ENCODE measurements at regions of chr9 and their contacts with region 1.

Region 1: DNA sequence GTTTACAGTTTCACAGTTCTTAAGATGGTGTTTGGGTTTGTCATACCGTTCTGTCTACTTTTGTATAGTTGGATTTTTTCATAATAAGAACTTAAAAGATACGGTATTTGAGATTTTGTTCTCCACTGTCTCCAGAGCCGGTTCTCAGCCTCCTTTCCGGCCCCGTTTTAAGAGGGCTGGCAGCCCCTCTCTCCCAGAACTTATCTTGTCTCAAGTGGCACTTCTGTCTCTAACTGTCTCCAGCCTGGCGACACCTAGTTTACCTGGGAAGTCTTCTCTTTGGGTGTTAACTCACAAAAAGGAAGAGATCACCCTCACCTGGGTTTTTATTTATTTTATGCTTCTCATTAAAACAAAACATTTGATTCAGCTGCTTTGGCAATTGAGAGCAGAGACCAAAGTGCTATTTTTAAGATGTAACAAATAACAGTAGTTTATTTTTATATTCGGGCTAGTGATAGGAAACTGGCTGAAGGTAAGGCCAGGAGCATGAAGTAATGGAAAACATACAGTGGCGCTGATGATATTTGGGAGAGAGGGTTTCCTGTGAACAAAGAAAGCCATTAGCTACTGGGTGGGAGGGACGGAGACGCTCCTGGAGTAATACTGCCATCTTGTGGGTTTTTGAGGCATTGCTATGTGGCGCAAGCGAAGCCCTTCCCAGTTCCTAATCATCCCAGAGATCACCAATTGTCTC is 48.3 kb downstream of the ACER2 start:
- DNase-seq: peak; percentile 77
- CTCF ChIP-seq: peak; percentile 88

Region 2: GRCh38 chr9:19085295-19085694 is 371.8 kb before region 1 on chr9:
- in situ Hi-C with region 1: loop called (anchors 10 kb)
- DNase-seq: peak; percentile 38
- CTCF ChIP-seq: peak; percentile 33

Region 3: GRCh38 chr9:19369107-19369506 is 88.0 kb before region 1 on chr9:
- in situ Hi-C with region 1: loop called (anchors 10 kb)
- DNase-seq: no peak
- CTCF ChIP-seq: no peak

Region 4: DNA sequence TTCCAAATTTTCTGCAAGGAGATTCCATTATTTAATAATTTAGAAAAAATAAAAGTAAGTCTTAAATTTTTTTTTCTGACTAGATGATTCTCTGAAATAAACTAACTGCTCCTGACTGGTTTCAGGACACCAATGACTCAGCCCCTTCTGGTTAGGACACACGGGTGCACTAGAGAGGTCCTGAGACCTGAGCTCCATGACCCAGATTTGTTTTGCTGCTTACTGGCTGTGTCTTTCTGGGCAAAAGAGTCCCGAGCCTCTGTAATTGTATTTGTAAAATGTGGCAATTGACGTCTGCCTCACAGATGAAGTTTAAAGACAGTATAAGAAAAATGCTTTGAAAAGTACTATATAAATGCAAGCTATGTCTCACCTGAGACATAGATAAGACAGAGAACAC is 242.6 kb after region 1 on chr9:
- in situ Hi-C with region 1: no loop called
- DNase-seq: no peak
- CTCF ChIP-seq: no peak

Region 5: GRCh38 chr9:20962536-20963225 is 1505.5 kb after region 1 on chr9:
- in situ Hi-C with region 1: no loop called
- DNase-seq: no peak
- CTCF ChIP-seq: no peak

Measured in GM13977 (cell line).